ENCODE measurements at regions of chr2 and their contacts with region 1.

Region 1: GRCh38 chr2:199739413-199740110 is 111.4 kb downstream of the FTCDNL1 start:
- DNase-seq: peak; percentile 42
- ATAC-seq: peak; percentile 89
- H3K4me3 ChIP-seq: no peak overlapping the region
- H3K27ac ChIP-seq: no peak overlapping the region
- H3K4me1 ChIP-seq: no peaks in the 10 kb centered on the region
- H3K27me3 ChIP-seq: peaks cover 8% of the 10 kb centered on the region; the same call in 1 of the 2 replicates
- CTCF ChIP-seq: peak; percentile 78 to 97 (median 89)
- POLR2A ChIP-seq: no peak
- RAD21 ChIP-seq: peak; percentile 87

Region 2: GRCh38 chr2:198657512-198658121 is 1081.9 kb before region 1 on chr2:
- CTCF ChIA-PET with region 1: no interaction called
- POLR2A ChIA-PET with region 1: no interaction called
- RAD21 ChIA-PET with region 1: no interaction called
- intact Hi-C with region 1: loop called (anchors 5 kb)
- DNase-seq: peak; percentile 28
- ATAC-seq: peak; percentile 53
- H3K4me3 ChIP-seq: no peak overlapping the region
- H3K27ac ChIP-seq: no peak overlapping the region
- H3K4me1 ChIP-seq: no peaks in the 10 kb centered on the region
- H3K27me3 ChIP-seq: no peaks in the 10 kb centered on the region
- CTCF ChIP-seq: peak; percentile 32 to 64 (median 53); a peak in 5 of 6 replicates
- POLR2A ChIP-seq: no peak
- RAD21 ChIP-seq: peak; percentile 56

Region 3: DNA sequence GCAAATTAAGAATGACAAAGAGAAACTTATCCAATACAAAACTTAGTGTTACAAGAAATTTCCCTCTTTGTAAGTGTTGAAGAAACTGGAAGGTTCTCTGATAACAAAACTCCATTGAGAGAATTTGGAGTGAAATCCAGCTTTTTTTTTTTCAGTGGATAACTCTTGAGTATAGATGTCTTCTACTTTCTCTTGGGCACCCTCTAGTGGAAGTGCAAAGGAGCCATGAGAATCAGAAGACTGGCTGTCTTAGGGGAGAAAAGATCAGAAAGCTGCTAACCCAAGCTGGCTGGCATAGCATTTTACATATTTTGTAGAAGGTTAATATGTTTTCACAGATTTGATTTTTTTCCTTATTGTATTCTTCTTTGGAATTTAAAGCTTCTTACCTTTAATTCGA is 143.0 kb before region 1 on chr2:
- CTCF ChIA-PET with region 1: interaction called, 4 read pairs
- POLR2A ChIA-PET with region 1: no interaction called
- RAD21 ChIA-PET with region 1: no interaction called
- intact Hi-C with region 1: loop called (anchors 5 kb)
- DNase-seq: peak; percentile 24
- ATAC-seq: peak; percentile 89
- H3K4me3 ChIP-seq: no peak overlapping the region
- H3K27ac ChIP-seq: no peak overlapping the region
- H3K4me1 ChIP-seq: no peaks in the 10 kb centered on the region
- H3K27me3 ChIP-seq: no peaks in the 10 kb centered on the region
- CTCF ChIP-seq: peak; percentile 26 to 72 (median 72); a peak in 5 of 6 replicates
- POLR2A ChIP-seq: no peak
- RAD21 ChIP-seq: peak; percentile 50

Measured in HCT116 (cell line).